PC-9 (cell line): ENCODE measurements at regions of chr2 and their contacts with region 1.

Region 1: DNA sequence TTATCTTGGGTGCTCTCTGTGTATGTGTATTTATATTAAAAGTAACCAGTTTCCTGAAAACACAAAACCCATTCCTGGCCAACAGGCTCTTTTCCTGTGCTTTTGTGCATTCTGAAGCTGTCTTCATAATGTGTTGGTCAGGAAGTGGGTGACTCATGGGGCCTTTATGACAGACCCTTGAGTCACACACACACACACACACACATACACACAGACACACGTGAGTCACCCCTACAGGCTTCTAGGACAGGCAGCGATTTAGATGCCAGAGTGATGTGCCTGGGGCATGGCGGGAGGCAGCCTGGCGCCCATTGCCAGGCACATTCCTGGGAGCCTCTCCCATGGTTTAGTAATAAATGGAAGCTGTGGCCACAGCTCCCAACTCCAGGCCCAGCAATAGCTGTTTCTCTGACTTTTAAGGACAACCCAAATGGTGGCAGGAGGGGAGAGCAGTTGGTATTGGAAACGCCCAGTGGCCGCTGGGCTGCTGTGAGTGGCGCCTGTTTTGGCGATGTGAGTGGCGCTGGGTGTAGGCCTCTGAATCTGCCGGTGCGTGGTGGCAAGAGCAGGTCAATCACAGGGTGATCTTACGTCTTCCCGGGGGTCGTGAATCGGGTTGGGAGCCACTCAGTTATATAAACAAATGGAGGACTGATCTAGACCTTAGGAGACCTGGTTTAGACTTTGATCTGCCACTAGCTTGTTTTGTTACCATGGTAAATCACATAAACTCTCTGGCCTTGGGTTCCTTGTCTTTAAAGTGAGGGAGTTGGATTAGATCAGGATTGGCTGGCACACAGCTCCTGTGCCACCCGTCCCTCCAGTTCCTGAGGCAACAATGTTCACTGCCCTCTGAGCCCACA is 150.7 kb upstream of the DLX2 start:
- DNase-seq: peak; percentile 99 to 100
- H3K4me3 ChIP-seq: no peak overlapping the region
- H3K27ac ChIP-seq: peak overlapping the region; percentile 65
- H3K4me1 ChIP-seq: peaks cover 62% of the 10 kb centered on the region
- H3K27me3 ChIP-seq: no peaks in the 10 kb centered on the region
- CTCF ChIP-seq: no peak

Region 2: DNA sequence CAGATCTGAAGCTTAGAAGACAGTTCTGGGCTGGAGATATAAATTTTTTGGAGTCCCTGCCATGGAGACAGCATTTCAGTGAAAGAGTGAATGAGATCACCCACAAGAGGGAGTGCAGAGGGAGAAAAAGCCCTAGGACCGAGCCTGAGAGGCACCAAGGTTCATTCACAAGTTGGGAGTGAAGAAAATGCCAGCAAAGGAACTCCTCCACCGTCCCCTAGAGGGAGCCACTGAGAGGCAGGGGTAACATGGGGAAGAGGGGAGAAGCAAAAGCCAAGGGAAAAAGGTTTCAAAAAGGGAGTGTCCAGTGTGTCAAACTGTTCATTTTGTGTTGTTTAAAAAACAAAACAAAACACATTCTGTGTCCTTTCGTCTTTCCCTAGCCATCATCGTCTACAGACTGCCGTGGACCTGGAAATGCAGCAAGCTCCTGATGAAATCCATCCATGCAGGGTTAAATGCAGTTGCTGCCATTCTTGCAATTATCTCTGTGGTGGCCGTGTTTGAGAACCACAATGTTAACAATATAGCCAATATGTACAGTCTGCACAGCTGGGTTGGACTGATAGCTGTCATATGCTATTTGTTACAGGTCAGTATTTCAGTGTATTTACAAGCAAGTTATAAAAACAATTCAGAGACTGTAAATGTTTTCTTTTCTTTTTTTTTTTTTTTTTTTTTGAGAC is 712.1 kb before region 1 on chr2:
- CTCF ChIA-PET with region 1: no interaction called
- POLR2A ChIA-PET with region 1: interaction called, 3 read pairs
- intact Hi-C with region 1: loop called (anchors 5 kb)
- DNase-seq: peak in 1 of 2 experiments; percentile 47
- H3K4me3 ChIP-seq: no peak overlapping the region
- H3K27ac ChIP-seq: no peak overlapping the region
- H3K4me1 ChIP-seq: no peaks in the 10 kb centered on the region
- H3K27me3 ChIP-seq: no peaks in the 10 kb centered on the region
- CTCF ChIP-seq: peak; percentile 90

Region 3: GRCh38 chr2:172179045-172179701 is 74.2 kb before region 1 on chr2:
- CTCF ChIA-PET with region 1: interaction called, 5 read pairs
- POLR2A ChIA-PET with region 1: interaction called, 8 read pairs
- intact Hi-C with region 1: loop called (anchors 1 kb)
- DNase-seq: peak; percentile 84 to 86
- H3K4me3 ChIP-seq: no peak overlapping the region
- H3K27ac ChIP-seq: no peak overlapping the region
- H3K4me1 ChIP-seq: peaks cover 29% of the 10 kb centered on the region
- H3K27me3 ChIP-seq: no peaks in the 10 kb centered on the region
- CTCF ChIP-seq: no peak

Region 4: DNA sequence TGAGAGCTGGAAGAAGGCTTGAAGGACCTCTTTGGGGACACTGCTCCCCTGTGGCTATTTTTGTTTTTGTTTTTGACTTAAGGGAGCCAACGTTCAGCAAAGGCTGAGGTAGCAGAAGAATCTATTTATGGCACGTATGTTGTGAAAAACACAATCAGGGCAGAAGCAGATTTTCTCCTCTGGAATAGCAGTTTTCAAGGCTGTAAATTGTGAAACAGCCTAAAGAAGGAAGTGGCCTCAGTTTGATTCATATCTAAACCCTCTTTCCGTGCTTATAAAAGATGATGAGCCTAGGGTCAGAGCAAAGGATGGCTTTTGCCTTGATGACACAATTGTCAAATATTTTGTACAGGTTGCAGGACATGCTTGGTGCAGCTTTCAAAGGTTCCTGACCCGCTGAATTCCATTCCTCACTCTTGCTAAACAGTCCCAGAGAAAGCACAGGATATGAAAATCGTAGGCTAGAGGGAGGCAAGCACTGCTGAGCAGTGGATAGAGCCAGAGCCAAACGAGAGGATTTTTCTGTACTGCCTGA is 44.6 kb before region 1 on chr2:
- CTCF ChIA-PET with region 1: interaction called, 3 read pairs
- POLR2A ChIA-PET with region 1: no interaction called
- intact Hi-C with region 1: loop called (anchors 1 kb)
- DNase-seq: peak; percentile 53 to 100
- H3K4me3 ChIP-seq: no peak overlapping the region
- H3K27ac ChIP-seq: peak overlapping the region; percentile 60
- H3K4me1 ChIP-seq: peaks cover 30% of the 10 kb centered on the region
- H3K27me3 ChIP-seq: no peaks in the 10 kb centered on the region
- CTCF ChIP-seq: peak; percentile 46; the same call in 1 of the 2 replicates

Region 5: GRCh38 chr2:172323256-172323655 is 69.8 kb after region 1 on chr2:
- CTCF ChIA-PET with region 1: no interaction called
- POLR2A ChIA-PET with region 1: no interaction called
- intact Hi-C with region 1: no loop called
- DNase-seq: no peak
- H3K4me3 ChIP-seq: no peak overlapping the region
- H3K27ac ChIP-seq: no peak overlapping the region
- H3K4me1 ChIP-seq: 0 out of 2 replicates have a peak, but pooled peaks cover 10% of the 10 kb centered on the region
- H3K27me3 ChIP-seq: no peaks in the 10 kb centered on the region
- CTCF ChIP-seq: no peak

Region 6: GRCh38 chr2:172404824-172405223 is 151.4 kb after region 1 on chr2:
- CTCF ChIA-PET with region 1: no interaction called
- POLR2A ChIA-PET with region 1: no interaction called
- intact Hi-C with region 1: loop called (anchors 1 kb)
- DNase-seq: peak in 1 of 2 experiments; percentile 26
- H3K4me3 ChIP-seq: no peak overlapping the region
- H3K27ac ChIP-seq: no peak overlapping the region
- H3K4me1 ChIP-seq: peaks cover 17% of the 10 kb centered on the region
- H3K27me3 ChIP-seq: no peaks in the 10 kb centered on the region
- CTCF ChIP-seq: no peak

Region 7: GRCh38 chr2:172442072-172442895 is 188.9 kb after region 1 on chr2:
- CTCF ChIA-PET with region 1: interaction called, 4 read pairs
- POLR2A ChIA-PET with region 1: interaction called, 6 read pairs
- intact Hi-C with region 1: loop called (anchors 1 kb)
- DNase-seq: peak; percentile 100
- H3K4me3 ChIP-seq: peak overlapping the region; percentile 5; the same call in 1 of the 2 replicates
- H3K27ac ChIP-seq: peak overlapping the region; percentile 81
- H3K4me1 ChIP-seq: peaks cover 80% of the 10 kb centered on the region
- H3K27me3 ChIP-seq: no peaks in the 10 kb centered on the region
- CTCF ChIP-seq: no peak